ENCODE measurements at regions of chr16 and their contacts with region 1.

Region 1: DNA sequence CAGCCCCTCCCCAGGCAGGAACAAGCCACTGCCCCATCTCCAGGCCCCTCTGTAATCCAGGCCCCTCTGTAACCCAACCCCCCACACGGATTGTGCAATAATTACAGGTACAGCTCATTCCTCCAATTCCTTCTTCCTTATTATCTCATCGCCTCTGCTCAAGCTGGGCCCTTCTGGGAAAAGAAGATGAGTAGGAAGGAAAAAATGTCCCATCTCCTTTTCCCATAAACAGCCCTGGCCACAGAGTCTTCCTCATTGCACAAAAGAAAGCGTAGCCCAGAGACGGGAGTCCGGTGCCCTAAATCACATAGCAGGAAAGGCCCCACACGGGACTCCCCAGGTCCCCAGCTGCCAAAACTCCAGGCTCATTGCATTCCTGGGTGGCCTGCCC is 3.6 kb upstream of the LITAFD start:
- DNase-seq: no peak
- H3K4me3 ChIP-seq: no peak overlapping the region
- H3K27ac ChIP-seq: peak overlapping the region in 1 of 2 experiments; percentile 35; a peak in 1 of 4 replicates
- H3K4me1 ChIP-seq: peaks cover 0 to 3% of the 10 kb centered on the region in 2 experiments; a peak in 1 of 4 replicates
- H3K27me3 ChIP-seq: no peaks in the 10 kb centered on the region
- CTCF ChIP-seq: no peak
- EP300 ChIP-seq: peak in 1 of 2 experiments; percentile 14; a peak in 1 of 4 replicates
- RAD21 ChIP-seq: no peak

Region 2: GRCh38 chr16:8660841-8661301 is 217.6 kb before region 1 on chr16:
- CTCF ChIA-PET with region 1: interaction called, 71 read pairs
- POLR2A ChIA-PET with region 1: interaction called, 7 read pairs
- DNase-seq: peak; percentile 81
- H3K4me3 ChIP-seq: peak overlapping the region in 1 of 2 experiments; percentile 44; a peak in 1 of 4 replicates
- H3K27ac ChIP-seq: no peak overlapping the region
- H3K4me1 ChIP-seq: peaks cover 0 to 3% of the 10 kb centered on the region in 2 experiments; a peak in 1 of 4 replicates
- H3K27me3 ChIP-seq: no peaks in the 10 kb centered on the region
- CTCF ChIP-seq: peak; percentile 82
- EP300 ChIP-seq: no peak
- RAD21 ChIP-seq: peak; percentile 98

Region 3: GRCh38 chr16:8797364-8798173 is 80.9 kb before region 1 on chr16 and contains the starts of genes PMM2 and TMEM186:
- CTCF ChIA-PET with region 1: interaction called, 30 read pairs
- POLR2A ChIA-PET with region 1: no interaction called
- DNase-seq: peak; percentile 98
- H3K4me3 ChIP-seq: peak within 1 kb of the TSS; percentile 86 to 94
- H3K27ac ChIP-seq: peak within 1 kb of the TSS; percentile 78 to 88
- H3K4me1 ChIP-seq: peaks cover 0 to 27% of the 10 kb centered on the region in 2 experiments
- H3K27me3 ChIP-seq: no peaks in the 10 kb centered on the region
- CTCF ChIP-seq: no peak
- EP300 ChIP-seq: peak in 1 of 2 experiments; percentile 17; a peak in 1 of 4 replicates
- RAD21 ChIP-seq: no peak
- polyA plus RNA-seq, gene PMM2: 24.3 and 27.6 TPM in 2 replicates
- polyA plus RNA-seq, gene TMEM186: 13.2 and 18.2 TPM in 2 replicates

Region 4: DNA sequence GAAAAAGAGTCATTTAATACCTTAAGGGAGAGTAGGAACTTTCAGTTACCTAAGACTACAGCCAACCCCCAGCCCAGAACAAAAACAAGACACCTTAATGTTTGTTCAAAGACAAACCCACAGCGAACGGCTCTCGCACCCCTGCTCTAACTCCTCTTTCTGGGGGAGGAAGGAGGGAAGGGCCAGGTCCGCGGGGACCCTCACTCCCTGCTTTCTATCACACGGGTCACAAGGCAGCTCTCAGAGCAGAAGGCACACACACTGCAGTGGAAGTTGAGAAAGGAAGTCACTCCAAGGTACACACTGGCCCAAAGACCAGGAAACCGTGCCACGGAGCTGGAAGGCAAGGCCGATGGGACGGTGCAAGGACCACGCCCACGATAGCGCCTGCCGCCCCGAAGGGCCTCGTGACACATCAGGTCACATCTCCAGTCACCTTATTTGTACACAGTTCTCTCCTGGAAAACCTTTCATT is 13.6 kb after region 1 on chr16:
- CTCF ChIA-PET with region 1: interaction called, 15 read pairs
- POLR2A ChIA-PET with region 1: no interaction called
- DNase-seq: no peak
- H3K4me3 ChIP-seq: no peak overlapping the region
- H3K27ac ChIP-seq: no peak overlapping the region
- H3K4me1 ChIP-seq: peaks cover 0 to 28% of the 10 kb centered on the region in 2 experiments; a peak in 1 of 4 replicates
- H3K27me3 ChIP-seq: no peaks in the 10 kb centered on the region
- CTCF ChIP-seq: no peak
- EP300 ChIP-seq: no peak
- RAD21 ChIP-seq: no peak

Region 5: GRCh38 chr16:8936421-8936820 is 57.9 kb after region 1 on chr16:
- CTCF ChIA-PET with region 1: interaction called, 12 read pairs
- POLR2A ChIA-PET with region 1: no interaction called
- DNase-seq: peak; percentile 68
- H3K4me3 ChIP-seq: no peak overlapping the region; a peak in 1 of 4 replicates
- H3K27ac ChIP-seq: no peak overlapping the region
- H3K4me1 ChIP-seq: peaks cover 0 to 7% of the 10 kb centered on the region in 2 experiments; a peak in 1 of 4 replicates
- H3K27me3 ChIP-seq: no peaks in the 10 kb centered on the region
- CTCF ChIP-seq: peak; percentile 54
- EP300 ChIP-seq: no peak
- RAD21 ChIP-seq: peak; percentile 54

Region 6: DNA sequence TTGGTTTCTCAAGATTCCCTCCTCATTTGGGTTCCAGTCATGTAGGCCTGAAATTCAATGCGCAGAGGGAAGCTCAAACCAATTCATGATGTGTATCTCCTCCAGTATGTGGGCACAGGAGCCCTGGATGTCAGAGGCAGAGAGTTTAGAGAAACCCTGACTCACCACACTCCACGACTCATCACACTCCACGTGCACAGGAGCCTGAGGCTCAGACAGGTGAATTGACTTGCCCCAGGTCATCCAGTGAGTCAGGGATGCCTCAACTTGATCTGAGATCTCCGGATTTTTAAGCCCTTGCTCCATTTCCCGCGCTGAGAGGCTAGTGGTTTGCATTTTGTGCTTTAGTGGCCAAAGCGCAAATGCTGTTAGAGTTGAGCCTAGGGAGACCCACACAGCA is 396.9 kb after region 1 on chr16:
- CTCF ChIA-PET with region 1: no interaction called
- POLR2A ChIA-PET with region 1: no interaction called
- DNase-seq: no peak
- H3K4me3 ChIP-seq: no peak overlapping the region
- H3K27ac ChIP-seq: no peak overlapping the region
- H3K4me1 ChIP-seq: no peaks in the 10 kb centered on the region
- H3K27me3 ChIP-seq: no peaks in the 10 kb centered on the region
- CTCF ChIP-seq: no peak
- EP300 ChIP-seq: no peak
- RAD21 ChIP-seq: no peak